HCT116 (cell line): ENCODE measurements at regions of chrX and their contacts with region 1.

Region 1: DNA sequence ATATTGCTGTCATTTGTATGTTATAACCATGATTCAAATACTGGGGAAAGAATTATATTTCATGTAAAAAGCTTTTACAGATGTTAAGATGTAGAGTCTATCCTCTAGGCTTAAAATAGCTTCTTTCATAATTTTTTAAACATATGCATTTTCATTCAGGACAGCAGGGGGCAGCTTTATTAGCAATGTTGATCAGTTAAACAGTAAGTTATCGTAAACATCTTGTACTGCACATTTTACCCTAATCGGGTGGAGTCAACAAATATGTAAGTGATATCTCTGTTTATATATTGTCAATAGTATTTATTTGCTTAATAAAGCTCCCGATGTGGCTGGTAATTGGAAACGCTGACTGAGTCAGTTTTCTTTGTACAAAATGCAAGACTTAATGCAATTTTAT is 142.5 kb upstream of the MED14 start:
- DNase-seq: peak; percentile 3
- ATAC-seq: peak; percentile 40; the same call in 1 of the 2 replicates
- H3K4me3 ChIP-seq: no peak overlapping the region
- H3K27ac ChIP-seq: no peak overlapping the region
- H3K4me1 ChIP-seq: peaks cover 0 to 4% of the 10 kb centered on the region in 2 experiments; a peak in 1 of 4 replicates
- H3K27me3 ChIP-seq: no peaks in the 10 kb centered on the region
- CTCF ChIP-seq: peak; percentile 40 to 52 (median 52); a peak in 4 of 6 replicates
- POLR2A ChIP-seq: no peak
- RAD21 ChIP-seq: peak; percentile 49

Region 2: GRCh38 chrX:40496728-40497127 is 381.2 kb before region 1 on chrX:
- CTCF ChIA-PET with region 1: no interaction called
- POLR2A ChIA-PET with region 1: no interaction called
- RAD21 ChIA-PET with region 1: no interaction called
- intact Hi-C with region 1: no loop called
- DNase-seq: no peak
- ATAC-seq: no peak
- H3K4me3 ChIP-seq: no peak overlapping the region
- H3K27ac ChIP-seq: no peak overlapping the region
- H3K4me1 ChIP-seq: no peaks in the 10 kb centered on the region
- H3K27me3 ChIP-seq: no peaks in the 10 kb centered on the region
- CTCF ChIP-seq: 0 out of 6 replicates have a peak, but pooled peaks of 1 of the 3 experiments have one; percentile 15
- POLR2A ChIP-seq: no peak
- RAD21 ChIP-seq: no peak

Region 3: GRCh38 chrX:40821780-40822179 is 56.1 kb before region 1 on chrX:
- CTCF ChIA-PET with region 1: no interaction called
- POLR2A ChIA-PET with region 1: no interaction called
- RAD21 ChIA-PET with region 1: no interaction called
- intact Hi-C with region 1: no loop called
- DNase-seq: no peak
- ATAC-seq: no peak
- H3K4me3 ChIP-seq: no peak overlapping the region
- H3K27ac ChIP-seq: no peak overlapping the region
- H3K4me1 ChIP-seq: no peaks in the 10 kb centered on the region
- H3K27me3 ChIP-seq: no peaks in the 10 kb centered on the region
- CTCF ChIP-seq: no peak
- POLR2A ChIP-seq: no peak
- RAD21 ChIP-seq: no peak

Region 4: GRCh38 chrX:40867352-40867751 is 10.5 kb before region 1 on chrX:
- CTCF ChIA-PET with region 1: interaction called, 10 read pairs
- POLR2A ChIA-PET with region 1: no interaction called
- RAD21 ChIA-PET with region 1: no interaction called
- intact Hi-C with region 1: no loop called
- DNase-seq: peak; percentile 8
- ATAC-seq: peak; percentile 78
- H3K4me3 ChIP-seq: 0 out of 4 replicates have a peak overlapping the region, but pooled peaks of 1 of the 2 experiments have one; percentile 18
- H3K27ac ChIP-seq: peak overlapping the region; percentile 25; the same call in 1 of the 2 replicates
- H3K4me1 ChIP-seq: peaks cover 10 to 17% of the 10 kb centered on the region in 2 experiments
- H3K27me3 ChIP-seq: no peaks in the 10 kb centered on the region
- CTCF ChIP-seq: no peak
- POLR2A ChIP-seq: no peak
- RAD21 ChIP-seq: no peak

Region 5: GRCh38 chrX:41116948-41117347 is 239.1 kb after region 1 on chrX:
- CTCF ChIA-PET with region 1: interaction called, 10 read pairs
- POLR2A ChIA-PET with region 1: no interaction called
- RAD21 ChIA-PET with region 1: interaction called in 1 of 2 experiments, 3 read pairs
- intact Hi-C with region 1: loop called (anchors 5 kb)
- DNase-seq: no peak
- ATAC-seq: no peak
- H3K4me3 ChIP-seq: no peak overlapping the region
- H3K27ac ChIP-seq: no peak overlapping the region
- H3K4me1 ChIP-seq: peaks cover 7 to 20% of the 10 kb centered on the region in 2 experiments
- H3K27me3 ChIP-seq: no peaks in the 10 kb centered on the region
- CTCF ChIP-seq: no peak
- POLR2A ChIP-seq: no peak
- RAD21 ChIP-seq: no peak